ENCODE measurements at regions of chr20 and their contacts with region 1.

Region 1: DNA sequence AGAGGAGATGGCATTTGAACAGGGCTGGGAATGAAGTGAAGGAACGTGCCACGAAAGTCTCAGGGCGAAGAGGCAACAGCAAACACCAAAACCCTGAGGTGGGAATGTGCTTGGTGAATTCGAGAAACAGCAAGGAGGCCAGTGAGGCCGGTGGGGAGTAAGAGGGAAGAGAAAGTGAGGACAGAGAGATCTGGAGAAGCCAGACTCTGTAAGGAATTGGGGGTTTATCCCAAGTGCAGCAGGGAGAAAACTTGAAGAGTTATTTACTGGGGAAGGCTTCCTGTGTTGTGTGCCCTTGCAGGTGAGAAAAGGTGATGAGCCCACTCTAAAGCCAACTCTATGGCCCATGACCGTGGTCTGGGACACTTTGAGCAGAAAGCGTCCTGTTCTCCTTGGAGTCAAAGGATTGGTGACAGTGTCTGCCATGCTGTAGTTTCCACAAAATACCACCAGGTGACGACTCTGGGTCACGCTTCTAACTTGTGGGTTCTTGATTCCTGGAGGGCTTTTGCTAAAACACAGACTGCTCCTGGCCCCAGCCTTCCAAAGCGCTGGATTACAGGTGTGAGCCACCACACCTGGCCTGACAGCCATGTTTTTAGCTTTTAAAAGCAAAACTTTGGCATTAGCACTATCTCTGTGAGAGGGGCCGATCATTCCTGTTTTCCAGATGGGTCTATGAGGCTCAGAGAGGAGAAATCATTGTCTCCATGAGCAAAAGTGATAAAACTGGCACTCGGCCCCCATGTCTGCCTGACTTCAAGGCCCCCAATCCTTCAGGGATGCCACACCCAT is 18.0 kb upstream of the CSNK2A1 start:
- DNase-seq: peak; percentile 80
- H3K4me3 ChIP-seq: no peak overlapping the region
- H3K27ac ChIP-seq: no peak overlapping the region
- H3K4me1 ChIP-seq: no peaks in the 10 kb centered on the region
- H3K27me3 ChIP-seq: no peaks in the 10 kb centered on the region
- CTCF ChIP-seq: peak; percentile 89

Region 2: DNA sequence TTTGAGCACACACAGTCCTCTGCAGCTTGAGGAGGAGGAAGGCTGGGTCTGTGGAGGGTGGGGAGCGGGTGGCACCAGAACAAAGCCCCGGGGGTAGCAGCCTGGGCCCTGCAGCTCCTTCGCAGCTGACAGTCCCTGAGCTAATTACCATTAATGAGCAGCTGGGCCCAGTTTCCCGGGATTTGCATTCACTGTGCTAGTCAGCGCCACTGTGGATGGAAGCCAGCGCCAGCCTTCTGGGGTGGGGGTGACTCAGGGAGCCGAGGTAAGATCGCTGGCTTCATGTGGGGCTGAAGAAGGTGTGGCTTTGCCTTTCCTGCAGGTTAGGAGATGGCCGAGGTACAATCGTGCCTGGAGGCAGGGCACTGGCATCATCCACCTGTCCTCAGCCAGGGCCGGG is 72.9 kb after region 1 on chr20:
- CTCF ChIA-PET with region 1: no interaction called
- POLR2A ChIA-PET with region 1: no interaction called
- intact Hi-C with region 1: no loop called
- DNase-seq: no peak
- H3K4me3 ChIP-seq: no peak overlapping the region
- H3K27ac ChIP-seq: no peak overlapping the region
- H3K4me1 ChIP-seq: no peaks in the 10 kb centered on the region
- H3K27me3 ChIP-seq: no peaks in the 10 kb centered on the region
- CTCF ChIP-seq: no peak

Region 3: GRCh38 chr20:645318-646106 is 83.9 kb after region 1 on chr20:
- CTCF ChIA-PET with region 1: interaction called, 22 read pairs
- POLR2A ChIA-PET with region 1: no interaction called
- intact Hi-C with region 1: loop called (anchors 1 kb)
- DNase-seq: peak; percentile 79
- H3K4me3 ChIP-seq: no peak overlapping the region
- H3K27ac ChIP-seq: no peak overlapping the region
- H3K4me1 ChIP-seq: no peaks in the 10 kb centered on the region
- H3K27me3 ChIP-seq: no peaks in the 10 kb centered on the region
- CTCF ChIP-seq: peak; percentile 97

Region 4: DNA sequence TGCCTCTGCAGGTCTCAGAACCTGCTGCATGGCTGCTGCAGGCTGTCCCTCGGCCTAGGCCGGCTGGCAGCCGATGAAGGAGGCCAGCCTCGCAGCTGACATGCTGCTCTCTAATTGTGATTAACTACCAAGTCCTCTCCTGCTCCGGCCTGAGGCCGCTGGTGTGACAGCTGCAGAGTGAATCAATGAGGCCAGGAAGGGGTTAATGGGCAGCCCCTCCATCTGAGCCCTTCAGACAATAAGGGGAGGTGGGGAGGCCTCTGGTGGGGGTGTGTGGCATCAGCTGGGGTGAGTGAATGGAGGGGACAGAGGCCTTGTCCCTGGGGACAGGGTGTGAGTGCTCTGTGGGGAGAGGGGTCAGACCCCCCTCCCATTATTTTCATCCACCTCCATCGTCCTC is 172.2 kb after region 1 on chr20:
- CTCF ChIA-PET with region 1: interaction called, 10 read pairs
- POLR2A ChIA-PET with region 1: no interaction called
- intact Hi-C with region 1: loop called (anchors 1 kb)
- DNase-seq: no peak
- H3K4me3 ChIP-seq: no peak overlapping the region
- H3K27ac ChIP-seq: no peak overlapping the region
- H3K4me1 ChIP-seq: no peaks in the 10 kb centered on the region
- H3K27me3 ChIP-seq: peaks cover 3% of the 10 kb centered on the region
- CTCF ChIP-seq: no peak

Region 5: GRCh38 chr20:739736-740135 is 178.1 kb after region 1 on chr20:
- CTCF ChIA-PET with region 1: interaction called, 10 read pairs
- POLR2A ChIA-PET with region 1: no interaction called
- intact Hi-C with region 1: loop called (anchors 1 kb)
- DNase-seq: no peak
- H3K4me3 ChIP-seq: no peak overlapping the region
- H3K27ac ChIP-seq: no peak overlapping the region
- H3K4me1 ChIP-seq: no peaks in the 10 kb centered on the region
- H3K27me3 ChIP-seq: no peaks in the 10 kb centered on the region
- CTCF ChIP-seq: no peak